Sigmoid colon (tissue), 7 donors: ENCODE measurements at regions of chr7 and their contacts with region 1.

Region 1: GRCh38 chr7:55964261-55965099 is at the start of gene NIPSNAP2:
- DNase-seq: peak; percentile 84
- H3K4me3 ChIP-seq: peak within 1 kb of the TSS; percentile 46 to 87 (median 80)
- H3K27ac ChIP-seq: peak within 1 kb of the TSS; percentile 94 to 99 (median 98)
- H3K4me1 ChIP-seq: peaks cover 0 to 40% (median 24%) of the 10 kb centered on the region in 4 donors
- H3K27me3 ChIP-seq: no peaks in the 10 kb centered on the region
- CTCF ChIP-seq: peak in 1 of 4 experiments; percentile 44
- EP300 ChIP-seq: no peak
- POLR2A ChIP-seq: no peak
- total RNA-seq, gene NIPSNAP2: 101 to 158 (median 134) TPM

Region 2: DNA sequence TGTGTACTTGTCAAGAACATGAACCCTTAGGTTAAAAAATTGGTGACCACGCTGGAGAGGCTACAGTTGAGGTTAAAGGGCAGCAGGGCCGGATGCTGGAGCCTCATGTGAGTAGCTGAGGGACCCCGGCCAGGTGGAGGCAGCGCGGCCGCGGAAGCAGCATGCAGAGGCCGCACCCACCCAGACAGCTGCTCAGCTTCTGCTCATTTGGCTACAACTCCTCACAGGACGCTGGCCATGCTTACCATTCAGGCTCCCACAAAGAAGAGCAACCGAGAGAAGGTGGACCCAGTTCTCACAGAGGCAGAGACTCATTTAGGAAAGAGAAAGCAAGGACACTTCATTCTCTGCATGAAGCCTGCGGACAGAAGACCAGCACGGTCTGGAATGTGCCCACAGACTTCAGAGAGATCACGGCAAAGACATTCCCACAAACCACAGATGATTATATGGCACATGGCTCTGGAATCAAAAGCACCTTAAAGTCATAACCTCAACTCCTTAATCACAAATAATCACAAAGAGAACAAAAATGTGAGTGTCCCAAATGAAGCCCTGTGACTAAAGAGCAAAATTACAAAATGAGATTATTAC is 486.6 kb before region 1 on chr7:
- intact Hi-C with region 1: no loop called
- DNase-seq: no peak
- H3K4me3 ChIP-seq: no peak overlapping the region
- H3K27ac ChIP-seq: no peak overlapping the region
- H3K4me1 ChIP-seq: peaks cover 0 to 4% (median 0%) of the 10 kb centered on the region in 4 donors
- H3K27me3 ChIP-seq: no peaks in the 10 kb centered on the region
- CTCF ChIP-seq: no peak
- EP300 ChIP-seq: no peak
- POLR2A ChIP-seq: no peak

Region 3: GRCh38 chr7:55572378-55573233 is 391.9 kb before region 1 on chr7 and contains the start of gene VOPP1:
- intact Hi-C with region 1: loop called (anchors 10 kb)
- DNase-seq: peak; percentile 73
- H3K4me3 ChIP-seq: peak within 1 kb of the TSS; percentile 97 to 99 (median 98)
- H3K27ac ChIP-seq: peak within 1 kb of the TSS; percentile 87 to 96 (median 92)
- H3K4me1 ChIP-seq: peaks cover 0 to 45% (median 25%) of the 10 kb centered on the region in 4 donors
- H3K27me3 ChIP-seq: no peaks in the 10 kb centered on the region
- CTCF ChIP-seq: no peak
- EP300 ChIP-seq: no peak
- POLR2A ChIP-seq: peak in 1 of 2 donors; percentile 20
- total RNA-seq, gene VOPP1: 22.2 to 26.4 (median 24.3) TPM

Region 4: GRCh38 chr7:55641273-55641691 is 323.2 kb before region 1 on chr7:
- intact Hi-C with region 1: loop called (anchors 1 kb)
- DNase-seq: peak; percentile 70
- H3K4me3 ChIP-seq: no peak overlapping the region
- H3K27ac ChIP-seq: peak overlapping the region in 1 of 4 donors; percentile 29
- H3K4me1 ChIP-seq: peaks cover 0 to 8% (median 3%) of the 10 kb centered on the region in 4 donors
- H3K27me3 ChIP-seq: no peaks in the 10 kb centered on the region
- CTCF ChIP-seq: peak; percentile 49 to 83 (median 69)
- EP300 ChIP-seq: no peak
- POLR2A ChIP-seq: no peak

Region 5: DNA sequence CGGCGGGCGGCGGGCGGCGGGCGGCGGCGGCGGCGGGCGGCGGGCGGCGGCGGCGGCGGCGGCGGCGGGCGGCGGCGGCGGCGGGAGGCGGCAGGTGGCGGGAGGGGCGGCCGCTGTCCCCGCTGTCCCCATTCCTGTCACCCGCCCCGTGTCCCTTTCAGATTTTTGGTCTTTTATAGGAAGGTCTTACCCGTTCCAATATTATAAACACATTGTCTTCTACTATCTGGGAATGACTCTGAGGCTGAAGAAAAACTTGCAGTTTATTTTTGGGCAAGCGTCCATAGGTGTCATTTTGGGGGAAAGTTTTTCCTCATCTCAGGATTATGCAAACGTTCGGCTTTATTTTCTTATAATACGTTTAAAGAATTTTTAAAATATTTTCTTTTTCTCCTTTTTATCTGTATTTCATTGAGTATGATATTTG is 76.6 kb before region 1 on chr7:
- intact Hi-C with region 1: loop called (anchors 1 kb)
- DNase-seq: no peak
- H3K4me3 ChIP-seq: peak overlapping the region; percentile 45 to 67 (median 50)
- H3K27ac ChIP-seq: peak overlapping the region; percentile 63 to 73 (median 70)
- H3K4me1 ChIP-seq: peaks cover 0 to 10% (median 0%) of the 10 kb centered on the region in 4 donors
- H3K27me3 ChIP-seq: no peaks in the 10 kb centered on the region
- CTCF ChIP-seq: no peak
- EP300 ChIP-seq: no peak
- POLR2A ChIP-seq: no peak

Region 6: GRCh38 chr7:55951637-55952351 is 12.7 kb before region 1 on chr7 and contains the start of gene MRPS17:
- intact Hi-C with region 1: loop called (anchors 1 kb)
- DNase-seq: peak; percentile 94
- H3K4me3 ChIP-seq: peak within 1 kb of the TSS; percentile 55 to 86 (median 82)
- H3K27ac ChIP-seq: peak within 1 kb of the TSS; percentile 77 to 87 (median 82)
- H3K4me1 ChIP-seq: peaks cover 0 to 14% (median 10%) of the 10 kb centered on the region in 4 donors
- H3K27me3 ChIP-seq: no peaks in the 10 kb centered on the region
- CTCF ChIP-seq: no peak
- EP300 ChIP-seq: peak in 1 of 4 donors; percentile 21
- POLR2A ChIP-seq: peak; percentile 61 to 71
- total RNA-seq, gene MRPS17: 9.7 to 15.6 (median 12.5) TPM

Region 7: GRCh38 chr7:56051339-56052191 is 87.1 kb after region 1 on chr7 and contains the starts of genes CCT6A and PSPH:
- intact Hi-C with region 1: loop called (anchors 5 kb)
- DNase-seq: peak; percentile 99
- H3K4me3 ChIP-seq: peak within 1 kb of the TSS; percentile 60 to 92 (median 81)
- H3K27ac ChIP-seq: peak within 1 kb of the TSS; percentile 82 to 97 (median 90)
- H3K4me1 ChIP-seq: peaks cover 0 to 64% (median 51%) of the 10 kb centered on the region in 4 donors
- H3K27me3 ChIP-seq: no peaks in the 10 kb centered on the region
- CTCF ChIP-seq: no peak
- EP300 ChIP-seq: peak in 1 of 4 donors; percentile 53
- POLR2A ChIP-seq: peak in 1 of 2 donors; percentile 77
- total RNA-seq, gene CCT6A: 67.0 to 93.1 (median 88.5) TPM
- total RNA-seq, gene PSPH: 7.2 to 18.8 (median 9.9) TPM